ENCODE measurements at regions of chr14 and their contacts with region 1.

Region 1: DNA sequence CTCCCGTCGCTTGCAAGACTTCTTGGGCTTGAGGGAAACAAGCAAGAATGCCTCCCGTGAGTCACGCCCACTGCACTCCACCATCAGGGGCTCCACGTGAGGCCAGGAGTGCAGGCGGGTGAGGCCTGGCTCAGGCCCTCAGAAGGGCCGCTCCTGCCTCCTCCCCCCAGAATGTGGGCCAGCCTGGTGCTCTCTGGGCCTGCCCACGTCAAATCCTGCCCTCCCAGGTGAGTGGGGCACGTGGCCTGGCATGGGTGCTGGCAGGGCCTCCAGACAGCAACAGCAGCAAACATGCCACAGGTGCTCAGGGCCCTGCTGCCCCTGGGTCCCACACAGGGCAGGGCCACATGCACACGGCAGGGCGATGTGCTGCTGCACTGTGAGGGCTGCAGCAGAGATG is 30.6 kb upstream of the BTBD6 start:
- DNase-seq: no peak
- H3K4me3 ChIP-seq: no peak overlapping the region
- H3K27ac ChIP-seq: no peak overlapping the region
- H3K4me1 ChIP-seq: no peaks in the 10 kb centered on the region
- H3K27me3 ChIP-seq: no peaks in the 10 kb centered on the region
- CTCF ChIP-seq: no peak
- EP300 ChIP-seq: no peak
- POLR2A ChIP-seq: no peak

Region 2: GRCh38 chr14:105294142-105294597 is 76.4 kb after region 1 on chr14:
- in situ Hi-C with region 1: no loop called
- intact Hi-C with region 1: loop called (anchors 2 kb)
- DNase-seq: no peak
- H3K4me3 ChIP-seq: no peak overlapping the region
- H3K27ac ChIP-seq: no peak overlapping the region
- H3K4me1 ChIP-seq: peaks cover 7 to 27% (median 12%) of the 10 kb centered on the region in 4 donors
- H3K27me3 ChIP-seq: no peaks in the 10 kb centered on the region
- CTCF ChIP-seq: no peak
- EP300 ChIP-seq: no peak
- POLR2A ChIP-seq: no peak

Region 3: GRCh38 chr14:105305345-105305744 is 87.6 kb after region 1 on chr14:
- in situ Hi-C with region 1: no loop called
- intact Hi-C with region 1: no loop called
- DNase-seq: no peak
- H3K4me3 ChIP-seq: no peak overlapping the region
- H3K27ac ChIP-seq: no peak overlapping the region
- H3K4me1 ChIP-seq: peaks cover 0 to 16% (median 6%) of the 10 kb centered on the region in 4 donors
- H3K27me3 ChIP-seq: no peaks in the 10 kb centered on the region
- CTCF ChIP-seq: no peak
- EP300 ChIP-seq: no peak
- POLR2A ChIP-seq: no peak

Region 4: DNA sequence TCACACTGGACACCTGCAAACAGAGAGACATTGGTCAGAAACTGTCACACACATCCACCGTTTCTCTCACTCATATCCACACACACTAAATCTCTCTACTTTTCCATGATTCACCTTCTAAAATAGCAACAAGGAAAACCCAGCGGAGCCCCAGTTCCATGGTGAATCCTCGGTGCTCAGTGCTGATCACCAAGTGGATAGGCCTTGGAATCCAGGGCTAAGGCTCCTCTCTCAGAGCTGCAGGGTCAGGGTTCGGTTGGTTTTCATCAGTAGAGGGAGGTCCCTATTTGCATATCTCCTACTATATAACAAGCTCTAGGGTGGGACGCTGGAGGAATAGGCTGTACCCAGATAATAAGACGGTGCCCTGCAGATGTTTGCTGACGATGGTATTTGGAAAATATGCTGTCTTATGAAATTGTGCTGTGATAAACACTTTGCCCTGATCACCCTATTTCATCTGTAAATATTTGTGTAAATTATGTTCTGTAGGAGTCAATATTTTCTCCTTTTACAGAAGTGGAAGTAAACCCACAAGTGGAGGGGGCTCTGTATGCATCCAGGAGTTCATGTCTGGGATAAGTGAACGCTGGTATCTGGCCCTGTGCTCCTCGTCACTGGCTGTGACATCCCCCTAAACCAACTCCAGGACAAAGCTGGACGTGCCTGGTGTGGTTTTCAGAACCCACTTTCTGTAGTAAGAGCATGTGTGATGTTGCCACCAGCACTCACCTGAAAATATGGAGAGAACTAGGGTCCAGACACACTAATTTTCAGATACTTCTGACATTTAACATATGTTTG is 1017.8 kb after region 1 on chr14:
- in situ Hi-C with region 1: no loop called
- intact Hi-C with region 1: no loop called
- DNase-seq: no peak
- H3K4me3 ChIP-seq: no peak overlapping the region
- H3K27ac ChIP-seq: no peak overlapping the region
- H3K4me1 ChIP-seq: no peaks in the 10 kb centered on the region
- H3K27me3 ChIP-seq: peaks cover 7% of the 10 kb centered on the region
- CTCF ChIP-seq: no peak
- EP300 ChIP-seq: no peak
- POLR2A ChIP-seq: no peak